PC-3 (cell line): ENCODE measurements at regions of chr1 and their contacts with region 1.

Region 1: DNA sequence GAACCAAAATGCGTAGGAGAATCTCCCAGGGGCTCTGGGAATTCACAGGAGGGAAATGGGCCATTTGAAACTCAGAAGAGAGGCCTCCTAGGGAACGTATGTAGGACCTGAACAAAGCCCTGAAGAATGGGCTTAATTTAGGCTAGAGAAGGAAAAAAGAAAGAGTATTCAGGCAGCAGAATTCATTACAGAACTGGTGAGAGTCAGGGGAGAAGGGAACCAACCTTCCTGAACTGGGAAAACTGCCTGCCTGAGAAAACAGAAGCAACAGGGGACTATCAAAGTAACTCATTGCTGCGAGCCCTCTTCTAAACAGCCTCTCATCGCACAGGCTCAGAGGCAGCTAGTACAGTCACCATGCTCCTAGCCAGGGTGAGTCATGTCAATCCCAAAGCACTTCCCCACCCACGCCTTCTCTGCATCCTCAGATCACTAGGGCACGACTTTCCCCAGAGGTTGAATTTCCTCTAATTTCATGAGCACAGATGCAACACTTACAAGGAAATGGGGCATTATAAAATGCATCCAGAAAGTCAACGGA is 98.1 kb downstream of the ADSS2 start:
- DNase-seq: peak; percentile 95
- ATAC-seq: peak; percentile 100
- H3K4me3 ChIP-seq: no peak overlapping the region
- H3K27ac ChIP-seq: peak overlapping the region; percentile 75
- H3K4me1 ChIP-seq: peaks cover 27% of the 10 kb centered on the region
- H3K27me3 ChIP-seq: no peaks in the 10 kb centered on the region
- CTCF ChIP-seq: no peak

Region 2: GRCh38 chr1:244054924-244055263 is 298.7 kb before region 1 on chr1:
- CTCF ChIA-PET with region 1: no interaction called
- POLR2A ChIA-PET with region 1: no interaction called
- intact Hi-C with region 1: no loop called
- DNase-seq: no peak
- ATAC-seq: no peak
- H3K4me3 ChIP-seq: no peak overlapping the region
- H3K27ac ChIP-seq: no peak overlapping the region
- H3K4me1 ChIP-seq: peaks cover 16% of the 10 kb centered on the region
- H3K27me3 ChIP-seq: no peaks in the 10 kb centered on the region
- CTCF ChIP-seq: no peak

Region 3: GRCh38 chr1:244329591-244330317 is 23.9 kb before region 1 on chr1:
- CTCF ChIA-PET with region 1: no interaction called
- POLR2A ChIA-PET with region 1: no interaction called
- intact Hi-C with region 1: no loop called
- DNase-seq: peak; percentile 76
- ATAC-seq: peak; percentile 74
- H3K4me3 ChIP-seq: no peak overlapping the region
- H3K27ac ChIP-seq: peak overlapping the region; percentile 63
- H3K4me1 ChIP-seq: peaks cover 28% of the 10 kb centered on the region
- H3K27me3 ChIP-seq: no peaks in the 10 kb centered on the region
- CTCF ChIP-seq: no peak

Region 4: DNA sequence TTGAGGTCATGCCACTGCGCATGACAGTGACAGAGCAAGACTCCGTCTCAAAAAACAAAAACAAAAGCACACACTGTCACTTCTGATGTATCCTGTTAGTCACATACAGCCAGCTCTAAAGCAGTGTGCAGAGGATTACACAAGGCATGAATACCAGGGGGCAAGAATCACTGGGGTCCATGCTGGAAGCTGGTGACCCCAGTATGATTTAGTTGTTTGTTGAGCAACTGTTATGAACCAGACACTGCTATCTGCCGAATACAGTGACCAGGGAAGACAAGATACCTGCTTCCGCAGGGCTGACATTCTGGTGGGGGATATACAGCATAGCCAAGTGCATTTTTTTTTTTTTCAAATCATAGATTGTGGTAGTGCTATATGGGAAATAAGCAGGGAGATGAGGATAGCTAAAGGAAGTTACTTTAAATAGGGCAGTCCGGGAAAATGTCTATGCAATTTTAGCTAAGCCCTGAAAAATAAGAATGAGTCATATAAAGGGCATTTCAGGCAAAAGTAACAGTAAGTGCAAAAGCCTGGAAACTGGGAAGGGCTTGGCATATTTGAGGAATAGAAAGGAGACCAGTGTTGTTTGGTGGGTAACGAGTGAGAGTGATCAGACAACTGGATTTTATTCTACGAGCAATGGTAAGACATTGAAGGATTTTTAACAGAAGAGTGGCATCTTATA is 28.4 kb after region 1 on chr1:
- CTCF ChIA-PET with region 1: no interaction called
- POLR2A ChIA-PET with region 1: interaction called, 13 read pairs
- intact Hi-C with region 1: no loop called
- DNase-seq: peak; percentile 36
- ATAC-seq: peak; percentile 71
- H3K4me3 ChIP-seq: no peak overlapping the region
- H3K27ac ChIP-seq: no peak overlapping the region
- H3K4me1 ChIP-seq: 0 out of 2 replicates have a peak, but pooled peaks cover 5% of the 10 kb centered on the region
- H3K27me3 ChIP-seq: no peaks in the 10 kb centered on the region
- CTCF ChIP-seq: no peak